Right lobe of liver (tissue), 6 donors: ENCODE measurements at regions of chr11 and their contacts with region 1.

Region 1: DNA sequence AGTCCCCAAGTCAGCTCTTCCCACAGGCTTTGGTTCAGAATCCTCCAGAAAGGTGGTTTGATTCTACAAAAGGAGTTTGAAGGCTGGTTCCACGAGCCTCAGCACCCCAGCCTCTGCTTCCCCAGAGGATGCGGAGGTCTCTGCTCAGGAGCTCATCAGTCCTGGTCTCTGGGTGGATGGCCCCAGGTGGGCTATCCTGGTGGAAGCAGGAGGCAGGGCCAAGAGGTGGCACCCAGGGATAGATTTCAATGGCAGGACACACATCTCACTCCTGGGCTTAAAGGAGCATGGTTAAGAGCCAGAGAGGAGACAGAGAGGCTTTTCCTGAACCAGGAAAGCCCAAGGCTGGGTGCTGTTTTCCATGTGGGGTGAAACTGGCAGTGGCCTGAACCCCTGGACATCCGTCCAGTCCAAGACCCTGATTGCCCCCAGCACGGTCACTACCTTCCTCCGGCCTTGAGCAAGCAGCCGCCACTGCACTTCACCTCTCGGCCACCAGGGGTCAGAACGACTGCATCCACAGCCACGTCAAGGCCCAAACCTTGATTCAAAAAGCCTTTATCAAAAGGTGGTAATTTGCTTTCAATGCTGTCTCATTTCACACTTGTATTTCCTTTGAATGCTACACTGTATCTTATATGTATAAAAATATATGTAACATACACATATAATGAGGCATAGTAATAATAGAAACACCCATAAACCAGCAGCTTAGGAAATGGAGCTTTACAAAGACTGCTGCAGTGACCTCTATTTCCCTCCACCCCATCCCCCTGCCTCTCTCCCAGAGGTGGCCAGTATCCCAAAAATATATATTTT is 19.3 kb upstream of the FXYD2 start:
- DNase-seq: peak; percentile 76 to 82 (median 78)
- ATAC-seq: peak; percentile 84 to 92 (median 86)
- H3K4me3 ChIP-seq: no peak overlapping the region
- H3K27ac ChIP-seq: no peak overlapping the region
- H3K4me1 ChIP-seq: no peaks in the 10 kb centered on the region
- H3K27me3 ChIP-seq: no peaks in the 10 kb centered on the region
- CTCF ChIP-seq: peak; percentile 97 to 99 (median 99)
- POLR2A ChIP-seq: no peak

Region 2: GRCh38 chr11:117946842-117947526 is 103.1 kb after region 1 on chr11:
- intact Hi-C with region 1: loop called (anchors 5 to 10 kb)
- DNase-seq: peak; percentile 84 to 88 (median 84)
- ATAC-seq: peak; percentile 92 to 97 (median 95)
- H3K4me3 ChIP-seq: no peak overlapping the region
- H3K27ac ChIP-seq: no peak overlapping the region
- H3K4me1 ChIP-seq: no peaks in the 10 kb centered on the region
- H3K27me3 ChIP-seq: no peaks in the 10 kb centered on the region
- CTCF ChIP-seq: peak; percentile 91 to 99 (median 96)
- POLR2A ChIP-seq: no peak

Region 3: GRCh38 chr11:118051611-118052461 is 208.0 kb after region 1 on chr11:
- intact Hi-C with region 1: loop called (anchors 5 kb)
- DNase-seq: peak in 1 of 3 donors; percentile 40
- ATAC-seq: peak in 3 of 4 donors; percentile 20 to 54 (median 39)
- H3K4me3 ChIP-seq: no peak overlapping the region
- H3K27ac ChIP-seq: no peak overlapping the region
- H3K4me1 ChIP-seq: no peaks in the 10 kb centered on the region
- H3K27me3 ChIP-seq: no peaks in the 10 kb centered on the region
- CTCF ChIP-seq: no peak
- POLR2A ChIP-seq: no peak